PC-9 (cell line): ENCODE measurements at regions of chr1 and their contacts with region 1.

Region 1: DNA sequence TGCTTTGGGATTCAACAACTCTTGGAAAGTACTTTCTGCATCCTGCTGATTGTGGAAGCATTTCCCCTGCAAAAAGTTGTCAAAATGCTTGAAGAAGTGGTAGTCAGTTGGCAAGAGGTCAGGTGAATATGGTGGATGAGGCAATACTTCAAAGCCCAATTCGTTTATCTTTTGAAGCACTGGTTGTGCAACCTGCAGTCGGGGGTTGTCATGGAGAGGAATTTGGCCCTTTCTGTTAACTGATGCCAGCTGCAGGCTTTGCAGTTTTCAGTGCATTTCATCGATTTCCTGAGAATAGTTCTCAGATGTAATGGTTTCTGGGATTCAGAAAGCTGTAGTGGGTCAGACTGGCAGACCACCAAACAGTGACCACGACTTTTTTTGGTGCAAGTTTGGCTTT is 47.6 kb upstream of the GJA5 start:
- DNase-seq: peak in 1 of 2 experiments; percentile 62
- H3K4me3 ChIP-seq: no peak overlapping the region
- H3K27ac ChIP-seq: no peak overlapping the region
- H3K4me1 ChIP-seq: peaks cover 14% of the 10 kb centered on the region
- H3K27me3 ChIP-seq: no peaks in the 10 kb centered on the region
- CTCF ChIP-seq: no peak

Region 2: DNA sequence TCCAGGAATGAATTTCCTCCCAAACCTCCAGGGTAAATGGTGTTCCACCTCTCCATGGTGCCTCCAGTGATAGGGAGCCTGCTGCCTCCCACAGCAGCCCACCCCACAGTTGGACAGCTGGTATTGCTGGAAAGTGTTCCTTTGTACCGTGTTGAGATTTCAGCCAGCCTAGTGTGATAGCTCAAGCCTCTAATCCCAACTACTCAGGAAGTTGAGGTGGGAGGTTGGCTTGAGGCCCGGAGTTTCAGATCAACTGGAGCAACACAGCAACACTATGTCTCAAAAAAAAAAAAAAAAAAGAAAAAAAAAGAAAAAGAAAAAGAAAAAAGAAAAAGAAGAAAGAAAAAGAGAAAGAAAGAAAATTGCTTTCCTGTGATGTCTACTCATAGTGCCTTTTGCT is 469.5 kb before region 1 on chr1:
- CTCF ChIA-PET with region 1: no interaction called
- POLR2A ChIA-PET with region 1: no interaction called
- intact Hi-C with region 1: no loop called
- DNase-seq: no peak
- H3K4me3 ChIP-seq: no peak overlapping the region
- H3K27ac ChIP-seq: no peak overlapping the region
- H3K4me1 ChIP-seq: no peaks in the 10 kb centered on the region
- H3K27me3 ChIP-seq: peaks cover 64% of the 10 kb centered on the region
- CTCF ChIP-seq: no peak

Region 3: GRCh38 chr1:147821883-147822282 is 13.9 kb after region 1 on chr1:
- CTCF ChIA-PET with region 1: interaction called, 15 read pairs
- POLR2A ChIA-PET with region 1: no interaction called
- intact Hi-C with region 1: no loop called
- DNase-seq: no peak
- H3K4me3 ChIP-seq: no peak overlapping the region
- H3K27ac ChIP-seq: peak overlapping the region; percentile 83
- H3K4me1 ChIP-seq: peaks cover 38% of the 10 kb centered on the region
- H3K27me3 ChIP-seq: no peaks in the 10 kb centered on the region
- CTCF ChIP-seq: no peak

Region 4: GRCh38 chr1:147882535-147882934 is 74.5 kb after region 1 on chr1:
- CTCF ChIA-PET with region 1: no interaction called
- POLR2A ChIA-PET with region 1: no interaction called
- intact Hi-C with region 1: no loop called
- DNase-seq: no peak
- H3K4me3 ChIP-seq: no peak overlapping the region
- H3K27ac ChIP-seq: no peak overlapping the region
- H3K4me1 ChIP-seq: no peaks in the 10 kb centered on the region
- H3K27me3 ChIP-seq: no peaks in the 10 kb centered on the region
- CTCF ChIP-seq: no peak